CD4-positive, alpha-beta T cell (primary cell): ENCODE measurements at regions of chr6 and their contacts with region 1.

Region 1: DNA sequence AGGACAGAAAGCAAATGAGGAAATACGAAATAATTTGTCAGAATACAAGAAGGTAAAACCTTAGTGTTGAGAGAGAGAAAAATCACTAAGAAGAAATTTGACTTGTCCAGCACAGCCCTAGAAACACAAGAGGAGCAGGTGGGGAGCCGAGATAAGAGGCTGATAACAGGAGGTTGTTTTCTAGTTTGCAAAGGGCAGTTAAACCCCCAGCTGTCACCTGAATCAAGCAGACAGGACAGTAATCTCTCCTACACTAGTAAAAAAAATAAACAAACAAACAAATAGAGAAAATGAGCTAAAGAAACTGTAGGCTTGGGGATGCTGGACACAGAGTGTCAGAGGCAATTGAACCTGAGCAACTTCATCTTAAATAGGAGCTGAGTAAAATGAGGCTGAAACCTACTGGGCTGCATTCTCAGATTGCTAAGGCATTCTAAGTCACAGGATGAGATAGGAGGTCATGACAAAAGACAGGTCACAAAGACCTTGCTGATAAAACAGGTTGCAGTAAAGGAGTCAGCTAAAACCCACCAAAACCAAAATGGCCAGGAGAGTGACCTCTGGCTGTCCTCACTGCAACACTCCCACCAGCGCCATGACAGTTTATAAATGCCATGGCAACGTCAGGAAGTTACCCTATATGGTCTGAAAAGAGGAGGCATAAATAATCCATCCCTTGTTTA is 40.4 kb downstream of the FAM184A start:
- DNase-seq: no peak
- ATAC-seq: no peak
- H3K4me3 ChIP-seq: no peak overlapping the region
- H3K4me3 Mint-ChIP-seq: no peak overlapping the region
- H3K27ac ChIP-seq: no peak overlapping the region
- H3K27ac Mint-ChIP-seq: no peak overlapping the region
- H3K4me1 ChIP-seq: no peaks in the 10 kb centered on the region
- H3K4me1 Mint-ChIP-seq: no peaks in the 10 kb centered on the region
- H3K27me3 ChIP-seq: no peaks in the 10 kb centered on the region
- H3K27me3 Mint-ChIP-seq: no peaks in the 10 kb centered on the region
- CTCF ChIP-seq: no peak

Region 2: DNA sequence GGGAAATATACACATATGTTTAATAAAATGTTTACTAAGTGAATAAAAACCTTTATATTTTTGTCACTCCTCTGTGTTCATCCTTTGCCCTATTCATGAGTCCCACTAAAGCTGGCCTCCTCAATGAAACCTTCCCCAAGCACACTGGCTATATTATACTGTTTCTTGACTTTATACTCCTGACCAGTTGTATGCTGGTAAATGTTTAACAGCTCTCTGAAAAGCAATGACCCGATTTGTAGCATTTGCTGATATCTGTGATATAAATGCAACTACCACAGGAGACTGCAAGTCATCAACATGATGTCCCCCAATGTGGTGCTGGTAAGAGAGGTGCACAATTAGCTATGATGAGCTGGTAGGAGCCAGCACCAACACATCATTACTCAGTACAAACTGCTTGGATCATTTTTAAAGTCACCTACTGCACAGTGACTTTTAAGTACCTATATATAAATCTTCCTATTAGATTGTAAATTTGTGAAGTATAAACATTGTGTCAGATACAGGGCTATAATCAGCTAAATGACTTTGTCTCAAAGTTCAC is 38.5 kb before region 1 on chr6:
- CTCF ChIA-PET with region 1: no interaction called
- POLR2A ChIA-PET with region 1: no interaction called
- intact Hi-C with region 1: no loop called
- DNase-seq: no peak
- ATAC-seq: no peak
- H3K4me3 ChIP-seq: no peak overlapping the region
- H3K4me3 Mint-ChIP-seq: no peak overlapping the region
- H3K27ac ChIP-seq: no peak overlapping the region
- H3K27ac Mint-ChIP-seq: no peak overlapping the region
- H3K4me1 ChIP-seq: no peaks in the 10 kb centered on the region
- H3K4me1 Mint-ChIP-seq: peaks cover 9% of the 10 kb centered on the region
- H3K27me3 ChIP-seq: no peaks in the 10 kb centered on the region
- H3K27me3 Mint-ChIP-seq: no peaks in the 10 kb centered on the region
- CTCF ChIP-seq: no peak

Region 3: GRCh38 chr6:119090256-119090655 is 52.2 kb after region 1 on chr6:
- CTCF ChIA-PET with region 1: no interaction called
- POLR2A ChIA-PET with region 1: no interaction called
- intact Hi-C with region 1: loop called in 1 of 2 experiments (anchors 2 kb)
- DNase-seq: no peak
- ATAC-seq: no peak
- H3K4me3 ChIP-seq: no peak overlapping the region
- H3K4me3 Mint-ChIP-seq: no peak overlapping the region
- H3K27ac ChIP-seq: no peak overlapping the region
- H3K27ac Mint-ChIP-seq: no peak overlapping the region
- H3K4me1 ChIP-seq: no peaks in the 10 kb centered on the region
- H3K4me1 Mint-ChIP-seq: no peaks in the 10 kb centered on the region
- H3K27me3 ChIP-seq: peaks cover 0 to 2% of the 10 kb centered on the region in 2 experiments
- H3K27me3 Mint-ChIP-seq: no peaks in the 10 kb centered on the region
- CTCF ChIP-seq: no peak